HEK293T (cell line): ENCODE measurements at regions of chr6 and their contacts with region 1.

Region 1: GRCh38 chr6:134519465-134519864 is 201.6 kb upstream of the SGK1 start:
- DNase-seq: no peak

Region 2: GRCh38 chr6:134502614-134503549 is 16.6 kb before region 1 on chr6:
- CTCF ChIA-PET with region 1: no interaction called
- POLR2A ChIA-PET with region 1: no interaction called
- DNase-seq: no peak

Region 3: DNA sequence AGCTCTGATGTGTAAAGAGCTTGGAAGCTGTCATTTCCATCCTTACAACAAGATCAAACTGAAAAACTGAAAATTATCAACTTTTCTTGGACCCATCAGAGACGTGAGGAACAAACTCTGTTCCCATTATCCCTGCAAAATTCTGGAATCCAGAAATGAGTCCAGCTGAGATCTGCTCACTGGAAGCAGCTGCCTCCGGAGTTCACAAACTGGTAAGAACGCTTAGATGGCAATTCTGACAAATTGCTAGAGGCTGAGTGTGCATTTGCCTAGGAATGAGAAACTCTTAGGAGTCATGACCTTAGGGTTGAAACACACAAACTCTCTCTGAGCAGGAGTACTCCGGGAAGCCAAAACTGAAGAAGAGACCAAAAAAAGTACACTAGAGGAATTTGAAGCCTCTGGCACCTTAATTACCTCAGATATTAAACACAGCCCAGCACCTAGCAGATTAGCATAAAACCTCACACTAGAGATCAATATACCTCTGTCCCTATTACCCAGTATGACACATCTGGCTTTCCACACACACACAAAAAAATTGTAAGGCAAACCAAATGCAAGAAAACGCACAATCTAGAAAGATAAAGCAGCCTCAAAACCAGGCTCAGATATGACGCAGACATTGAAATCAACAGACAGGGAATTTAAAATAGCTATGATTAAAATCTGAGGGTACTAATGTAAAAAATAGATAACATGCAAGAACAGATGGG is 31.9 kb after region 1 on chr6:
- CTCF ChIA-PET with region 1: interaction called, 11 read pairs
- POLR2A ChIA-PET with region 1: no interaction called
- DNase-seq: no peak